Activated T-helper 1 cell treated with anti-CD3 and anti-CD28 coated beads, Interleukin-12 subunit alpha, Interleukin-12 subunit beta, Interleukin-2, Interleukin-4 antibody, amounts not matched to agents 30 ng/mL and 10 ng/mL and 1 ng/mL, durations not matched to agents 14 hours and 24 hours and 36 hours (primary cell): ENCODE measurements at regions of chr10 and their contacts with region 1.

Region 1: GRCh38 chr10:96831867-96832720 is at the start of gene LCOR:
- DNase-seq: peak; percentile 76
- H3K4me3 Mint-ChIP-seq: peak within 1 kb of the TSS; percentile 89
- H3K27ac Mint-ChIP-seq: peak within 1 kb of the TSS; percentile 96
- H3K4me1 Mint-ChIP-seq: peaks cover 53% of the 10 kb centered on the region
- H3K27me3 Mint-ChIP-seq: peaks cover 2% of the 10 kb centered on the region
- total RNA-seq, gene LCOR: 26.2 and 31.9 TPM in 2 replicates

Region 2: GRCh38 chr10:96043033-96043932 is 788.8 kb before region 1 on chr10 and contains the start of gene CCNJ:
- intact Hi-C with region 1: loop called (anchors 10 kb)
- DNase-seq: peak; percentile 79
- H3K4me3 Mint-ChIP-seq: peak within 1 kb of the TSS; percentile 92
- H3K27ac Mint-ChIP-seq: peak within 1 kb of the TSS; percentile 83
- H3K4me1 Mint-ChIP-seq: peaks cover 42% of the 10 kb centered on the region
- H3K27me3 Mint-ChIP-seq: peaks cover 2% of the 10 kb centered on the region
- total RNA-seq, gene CCNJ: 9.7 and 10.2 TPM in 2 replicates

Region 3: DNA sequence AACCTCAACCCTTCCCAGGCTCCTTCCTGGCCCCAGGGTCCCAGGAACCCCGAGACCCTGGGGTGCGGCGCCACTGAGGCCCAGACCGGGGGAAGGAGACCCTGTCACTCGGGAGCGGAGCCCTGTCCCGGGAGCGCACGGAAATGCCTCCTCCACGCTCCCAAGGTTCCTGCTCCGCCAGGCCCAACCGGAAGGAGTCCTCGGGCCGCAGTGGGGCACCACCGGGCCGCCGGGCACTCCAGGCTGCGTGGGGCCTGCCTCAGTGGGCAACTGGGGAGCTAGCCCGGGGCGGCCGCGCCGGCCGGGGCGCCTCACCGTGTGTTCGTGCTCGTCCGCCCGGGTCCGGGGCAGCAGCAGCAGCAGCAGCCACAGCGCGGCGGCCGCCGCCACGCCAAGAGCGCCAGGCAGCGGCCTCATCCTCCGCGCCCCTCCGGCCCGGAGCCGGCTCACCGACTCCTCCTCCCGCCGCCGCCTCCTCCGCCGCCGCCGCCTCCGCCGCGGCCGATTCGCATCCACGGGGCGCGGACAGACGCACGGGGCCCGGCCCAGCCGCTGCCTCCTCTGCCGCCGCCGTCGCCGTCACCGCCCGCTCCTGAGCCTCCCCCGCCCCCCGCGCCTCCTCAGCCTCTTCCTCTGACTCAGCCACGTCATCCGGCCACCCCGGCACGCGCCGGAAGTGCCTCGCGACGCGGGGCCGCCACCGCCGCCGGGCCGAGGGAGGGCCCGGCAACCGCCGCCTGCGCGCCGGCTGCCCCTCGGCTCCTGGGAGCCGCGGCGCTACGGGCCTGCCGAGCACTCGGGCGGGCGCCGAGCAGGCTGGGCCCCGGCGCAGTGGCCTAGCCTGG is 245.5 kb before region 1 on chr10 and contains the start of gene TM9SF3:
- intact Hi-C with region 1: loop called (anchors 1 kb)
- DNase-seq: peak; percentile 86
- H3K4me3 Mint-ChIP-seq: peak within 1 kb of the TSS; percentile 96
- H3K27ac Mint-ChIP-seq: peak within 1 kb of the TSS; percentile 89
- H3K4me1 Mint-ChIP-seq: peaks cover 43% of the 10 kb centered on the region
- H3K27me3 Mint-ChIP-seq: peaks cover 9% of the 10 kb centered on the region
- total RNA-seq, gene TM9SF3: 81.7 and 87.7 TPM in 2 replicates

Region 4: DNA sequence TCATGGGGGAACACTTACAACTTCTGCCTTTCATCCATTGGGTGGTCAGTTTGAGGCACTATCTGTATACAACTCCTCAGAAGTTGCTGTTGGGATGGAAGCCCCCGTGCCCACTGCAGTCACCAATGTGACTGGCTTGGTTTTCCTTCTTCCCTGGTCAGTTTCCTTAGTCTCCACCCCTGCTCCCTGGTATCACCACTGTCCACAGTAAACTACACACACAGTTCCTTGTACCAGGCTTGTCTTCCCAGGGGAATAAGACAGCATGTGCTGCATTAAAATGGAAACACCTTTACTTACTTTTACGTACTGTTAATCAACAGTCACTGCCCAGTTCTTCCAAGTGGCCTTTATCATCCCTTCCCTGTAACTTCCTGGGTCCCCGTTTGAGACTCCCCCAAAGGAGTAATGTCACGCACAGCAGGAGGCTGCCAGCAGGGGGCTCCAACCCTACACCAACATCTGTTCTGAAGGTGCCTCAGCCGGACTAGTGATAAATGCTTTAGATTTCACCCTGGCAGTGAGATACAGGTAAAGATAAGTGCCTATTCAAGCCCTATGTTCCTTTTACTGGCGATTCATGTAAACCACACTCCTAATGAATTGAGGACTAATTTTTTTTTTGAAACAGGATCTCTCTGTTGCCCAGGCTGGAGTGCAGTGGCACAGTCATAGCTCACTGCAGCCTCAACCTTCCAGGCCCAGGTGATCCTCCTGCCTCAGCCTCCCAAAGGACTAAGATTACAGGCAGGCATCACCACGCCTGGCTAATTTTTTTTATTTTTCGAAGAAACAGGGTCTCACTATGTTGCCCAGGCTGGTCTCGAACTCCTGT is 66.5 kb before region 1 on chr10:
- intact Hi-C with region 1: loop called (anchors 1 kb)
- DNase-seq: peak; percentile 42
- H3K4me3 Mint-ChIP-seq: no peak overlapping the region
- H3K27ac Mint-ChIP-seq: no peak overlapping the region
- H3K4me1 Mint-ChIP-seq: peaks cover 6% of the 10 kb centered on the region
- H3K27me3 Mint-ChIP-seq: peaks cover 7% of the 10 kb centered on the region

Region 5: DNA sequence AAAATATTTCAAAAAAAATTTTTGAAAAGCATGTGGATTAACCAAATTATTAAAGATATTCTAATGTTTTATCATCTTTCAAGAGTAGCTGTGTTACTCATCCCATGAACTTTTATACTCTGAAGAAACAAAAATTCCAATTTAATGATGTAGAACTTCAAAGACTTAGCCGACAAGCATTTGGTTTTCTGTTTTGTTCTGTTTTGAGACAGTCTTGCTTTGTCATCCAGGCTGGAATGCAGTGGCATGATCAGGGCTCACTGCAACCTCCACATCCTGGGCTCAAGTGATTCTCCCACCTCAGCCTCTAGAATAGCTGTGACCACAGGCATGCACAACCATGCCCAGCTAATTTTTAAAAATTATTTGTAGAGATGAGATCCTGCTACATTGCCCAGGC is 17.8 kb before region 1 on chr10:
- intact Hi-C with region 1: no loop called
- DNase-seq: no peak
- H3K4me3 Mint-ChIP-seq: no peak overlapping the region
- H3K27ac Mint-ChIP-seq: no peak overlapping the region
- H3K4me1 Mint-ChIP-seq: no peaks in the 10 kb centered on the region
- H3K27me3 Mint-ChIP-seq: peaks cover 21% of the 10 kb centered on the region

Region 6: DNA sequence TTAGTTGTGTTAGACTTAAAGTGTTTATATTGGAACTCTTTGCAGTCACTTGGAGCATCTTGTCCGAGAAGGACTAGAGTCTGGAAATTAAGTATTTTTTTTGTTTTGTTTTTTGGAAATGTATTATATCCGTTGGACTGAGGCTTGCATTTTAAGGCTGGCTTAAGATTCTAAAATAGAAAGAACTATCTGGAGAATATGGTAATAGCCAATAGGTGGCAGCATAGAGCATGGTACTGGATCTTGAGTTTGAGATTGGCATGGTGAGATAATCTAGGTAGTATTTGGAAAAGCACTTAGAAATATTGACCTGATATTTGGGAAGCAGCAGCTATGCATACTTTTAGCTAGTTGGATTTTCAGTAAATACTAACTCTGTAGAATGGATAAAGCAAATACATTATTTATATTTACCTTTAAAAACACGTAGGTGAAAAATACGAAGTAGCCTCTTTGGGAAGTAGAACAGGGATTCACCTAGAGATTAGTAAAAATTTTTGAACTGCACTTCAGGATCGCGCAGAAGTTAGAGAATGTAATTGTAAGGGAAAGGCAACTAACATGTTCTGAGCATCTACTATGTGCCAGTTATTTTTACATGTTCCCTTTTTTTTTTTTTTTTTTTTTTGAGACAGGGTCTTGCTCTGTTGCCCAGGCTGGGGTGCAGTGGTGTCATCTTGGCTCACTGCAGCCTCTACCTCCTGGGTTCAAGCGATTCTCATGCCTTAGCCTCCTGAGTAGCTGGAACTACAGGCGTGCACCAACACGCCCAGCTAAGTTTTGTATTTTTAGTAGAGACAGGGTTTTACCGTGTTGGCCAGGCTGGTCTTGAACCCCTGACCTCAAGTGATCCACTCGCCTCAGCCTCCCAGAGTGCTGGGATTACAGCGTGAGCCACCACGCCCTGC is 78.6 kb after region 1 on chr10:
- intact Hi-C with region 1: loop called (anchors 5 kb)
- DNase-seq: no peak
- H3K4me3 Mint-ChIP-seq: no peak overlapping the region
- H3K27ac Mint-ChIP-seq: no peak overlapping the region
- H3K4me1 Mint-ChIP-seq: peaks cover 21% of the 10 kb centered on the region
- H3K27me3 Mint-ChIP-seq: no peaks in the 10 kb centered on the region

Region 7: DNA sequence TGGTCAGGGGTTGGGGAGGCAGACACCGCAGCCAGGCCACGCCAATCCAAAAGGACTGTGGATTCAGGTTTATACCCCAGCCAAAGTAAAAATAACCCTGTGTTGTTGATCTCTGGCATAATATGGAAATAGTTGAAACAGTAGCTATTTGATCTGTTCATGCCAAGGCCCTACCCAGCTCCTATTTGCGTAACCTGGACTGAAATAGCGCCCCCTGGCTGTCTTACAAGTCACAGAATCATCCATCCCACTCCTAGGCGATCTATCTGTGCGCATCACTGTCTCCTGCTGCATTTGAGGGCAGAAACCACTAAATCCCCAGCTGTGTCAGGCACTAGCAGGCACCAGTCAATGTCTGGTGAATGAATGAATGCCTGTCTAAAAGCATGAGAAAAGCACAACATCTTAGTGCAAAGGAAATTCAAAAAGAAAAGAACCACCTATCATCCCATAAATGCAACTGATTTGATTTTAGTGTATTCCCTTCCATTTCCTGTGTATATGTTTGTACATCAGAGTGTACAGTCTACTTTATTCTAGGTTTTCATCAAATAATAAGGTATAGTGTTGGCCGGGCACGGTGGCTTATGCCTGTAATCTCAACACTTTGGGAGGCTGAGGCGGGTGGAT is 193.6 kb after region 1 on chr10:
- intact Hi-C with region 1: loop called (anchors 2 kb)
- DNase-seq: peak; percentile 41
- H3K4me3 Mint-ChIP-seq: no peak overlapping the region
- H3K27ac Mint-ChIP-seq: no peak overlapping the region
- H3K4me1 Mint-ChIP-seq: peaks cover 10% of the 10 kb centered on the region
- H3K27me3 Mint-ChIP-seq: peaks cover 17% of the 10 kb centered on the region

Region 8: DNA sequence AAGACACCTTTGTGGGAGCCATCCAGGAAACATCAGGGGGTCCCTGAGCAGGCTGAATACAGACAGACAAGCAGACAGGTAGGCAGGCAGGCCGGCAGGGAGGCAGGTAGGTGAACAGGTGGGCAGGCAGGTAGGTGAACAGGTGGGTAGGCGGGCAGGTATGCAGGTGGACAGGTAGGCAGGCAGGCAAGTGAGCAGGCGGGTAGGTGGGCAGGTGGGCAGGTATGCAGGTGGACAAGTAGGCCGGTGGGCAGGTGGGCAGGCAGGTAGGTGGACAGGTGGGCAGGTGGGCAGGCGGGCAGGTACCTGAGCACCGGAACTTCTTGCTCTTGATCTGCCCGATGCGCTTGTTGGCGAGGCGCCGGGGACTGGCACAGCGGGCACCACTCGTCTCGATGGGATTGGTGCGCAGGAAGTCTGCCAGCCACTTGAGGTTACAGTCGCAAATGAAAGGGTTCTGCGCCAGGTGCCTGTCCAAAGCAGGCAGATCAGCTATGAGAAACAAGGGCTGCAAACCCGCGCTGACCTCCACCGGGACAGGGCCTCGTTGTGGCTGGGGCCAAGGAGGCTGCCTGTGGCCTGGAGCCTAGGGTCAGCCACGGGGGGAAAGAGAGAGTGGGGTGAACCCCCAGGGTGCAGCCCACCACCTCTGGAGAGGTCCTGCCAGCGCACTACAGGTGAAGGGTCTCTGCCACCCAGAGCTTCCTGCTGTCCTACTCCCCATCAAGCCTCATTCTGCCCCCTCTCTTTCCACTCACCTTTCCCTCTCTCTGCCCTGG is 216.7 kb after region 1 on chr10:
- intact Hi-C with region 1: no loop called
- DNase-seq: no peak
- H3K4me3 Mint-ChIP-seq: no peak overlapping the region
- H3K27ac Mint-ChIP-seq: no peak overlapping the region
- H3K4me1 Mint-ChIP-seq: no peaks in the 10 kb centered on the region
- H3K27me3 Mint-ChIP-seq: peaks cover 9% of the 10 kb centered on the region

Region 9: GRCh38 chr10:97318772-97319651 is 486.9 kb after region 1 on chr10 and contains the start of gene FRAT1:
- intact Hi-C with region 1: no loop called
- DNase-seq: peak; percentile 86
- H3K4me3 Mint-ChIP-seq: peak within 1 kb of the TSS; percentile 87
- H3K27ac Mint-ChIP-seq: peak within 1 kb of the TSS; percentile 97
- H3K4me1 Mint-ChIP-seq: peaks cover 26% of the 10 kb centered on the region
- H3K27me3 Mint-ChIP-seq: peaks cover 24% of the 10 kb centered on the region
- total RNA-seq, gene FRAT1: 3.0 and 3.3 TPM in 2 replicates

Region 10: GRCh38 chr10:97498076-97498840 is 666.2 kb after region 1 on chr10 and contains the start of gene MMS19:
- intact Hi-C with region 1: loop called (anchors 2 kb)
- DNase-seq: peak; percentile 99
- H3K4me3 Mint-ChIP-seq: peak within 1 kb of the TSS; percentile 99
- H3K27ac Mint-ChIP-seq: peak within 1 kb of the TSS; percentile 99
- H3K4me1 Mint-ChIP-seq: peaks cover 47% of the 10 kb centered on the region
- H3K27me3 Mint-ChIP-seq: peaks cover 34% of the 10 kb centered on the region
- total RNA-seq, gene MMS19: 91.8 and 93.2 TPM in 2 replicates